GM23248 (cell line): ENCODE measurements at regions of chr5 and their contacts with region 1.

Region 1: DNA sequence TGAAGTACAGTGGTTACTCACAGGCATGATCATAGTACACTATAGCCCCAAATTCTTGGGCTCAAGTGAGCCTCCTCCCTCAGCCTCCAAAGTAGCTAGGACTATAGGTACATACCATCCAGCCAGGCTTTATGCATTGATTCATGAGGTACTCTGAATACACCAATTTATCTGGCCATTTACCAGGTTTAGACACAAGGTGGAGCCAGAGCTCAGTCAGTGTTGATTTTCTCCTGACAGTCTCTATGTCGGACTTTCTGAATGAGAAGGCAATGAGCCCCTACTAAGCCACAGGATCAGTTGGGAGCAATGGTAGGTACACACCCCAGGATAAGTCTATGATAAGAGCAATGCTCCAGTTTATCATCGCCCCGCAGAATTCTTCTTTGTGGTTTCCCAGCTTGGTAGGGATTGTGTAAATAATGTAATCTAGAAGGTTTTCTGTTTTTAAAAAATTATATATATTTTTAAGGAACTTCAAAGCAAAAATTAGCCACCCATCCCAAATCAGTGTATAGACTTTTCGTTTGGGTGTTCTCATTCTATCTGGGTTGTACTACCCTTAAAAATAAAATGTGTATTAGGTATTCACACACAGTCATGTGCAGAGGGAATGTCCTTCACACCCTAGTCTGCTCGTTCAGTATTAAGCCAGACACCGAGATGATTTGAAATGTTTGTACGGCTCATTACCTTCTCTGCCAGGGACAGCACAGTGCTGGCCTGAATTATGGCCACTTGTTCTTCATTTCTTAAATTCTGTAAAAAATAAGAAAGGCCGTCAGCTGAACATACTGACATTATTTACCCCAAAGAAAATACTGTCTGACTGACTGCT is 118.4 kb upstream of the DPYSL3 start:
- DNase-seq: peak; percentile 73
- H3K4me3 ChIP-seq: no peak overlapping the region
- H3K27ac ChIP-seq: no peak overlapping the region
- H3K4me1 ChIP-seq: no peaks in the 10 kb centered on the region
- H3K27me3 ChIP-seq: peaks cover 15% of the 10 kb centered on the region

Region 2: DNA sequence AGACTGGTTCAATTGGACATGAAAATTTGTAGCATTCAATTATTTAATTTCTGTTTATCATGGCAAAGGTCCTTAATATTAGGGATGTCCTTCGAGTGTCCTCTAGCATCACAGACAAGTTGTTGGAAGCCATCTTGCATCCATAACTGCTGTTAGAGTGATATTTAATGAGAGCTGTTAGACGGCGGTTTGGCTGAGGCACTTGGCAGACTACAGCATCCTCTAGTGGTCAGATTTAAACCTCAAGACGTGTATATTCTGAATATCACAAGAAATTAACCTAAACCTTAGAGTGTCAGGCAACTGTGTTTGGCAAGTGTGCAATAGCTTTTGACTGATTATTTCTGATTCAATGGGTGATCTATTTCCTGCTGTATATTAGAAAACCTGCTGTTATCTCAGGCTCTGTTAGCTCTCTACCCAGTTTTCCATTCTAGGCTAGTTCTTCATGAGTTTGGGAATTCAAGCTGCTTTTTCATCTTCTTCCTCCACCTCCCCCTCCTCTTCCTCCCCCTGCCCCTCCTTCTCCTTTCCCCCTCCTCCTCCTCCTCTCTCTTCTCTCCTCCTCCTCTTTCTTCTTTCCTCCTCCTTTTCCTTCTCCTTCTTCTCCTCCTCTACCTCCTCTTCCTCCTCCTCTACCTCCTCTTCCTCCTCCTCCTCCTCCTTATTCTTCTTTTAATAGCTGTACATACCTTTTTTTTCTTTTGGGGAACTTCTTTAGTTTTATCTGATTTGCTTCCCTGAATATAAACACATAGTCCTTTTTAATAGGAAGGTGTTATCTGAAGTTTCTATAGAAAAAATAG is 194.6 kb after region 1 on chr5:
- in situ Hi-C with region 1: loop called (anchors 10 kb)
- DNase-seq: peak; percentile 70
- H3K4me3 ChIP-seq: no peak overlapping the region
- H3K27ac ChIP-seq: no peak overlapping the region
- H3K4me1 ChIP-seq: no peaks in the 10 kb centered on the region
- H3K27me3 ChIP-seq: peaks cover 34% of the 10 kb centered on the region